ENCODE measurements at regions of chr14 and their contacts with region 1.

Region 1: GRCh38 chr14:31207755-31208545 is at the start of gene HECTD1:
- DNase-seq: peak; percentile 85
- H3K4me3 Mint-ChIP-seq: peak within 1 kb of the TSS; percentile 95
- H3K27ac Mint-ChIP-seq: peak within 1 kb of the TSS; percentile 100
- H3K4me1 Mint-ChIP-seq: peaks cover 45% of the 10 kb centered on the region
- H3K27me3 Mint-ChIP-seq: peaks cover 3% of the 10 kb centered on the region
- total RNA-seq, gene HECTD1: 118 and 127 TPM in 2 replicates

Region 2: GRCh38 chr14:30960216-30960615 is 247.7 kb before region 1 on chr14:
- intact Hi-C with region 1: loop called (anchors 5 kb)
- DNase-seq: no peak
- H3K4me3 Mint-ChIP-seq: no peak overlapping the region
- H3K27ac Mint-ChIP-seq: no peak overlapping the region
- H3K4me1 Mint-ChIP-seq: peaks cover 24% of the 10 kb centered on the region
- H3K27me3 Mint-ChIP-seq: no peaks in the 10 kb centered on the region

Region 3: GRCh38 chr14:31127690-31128089 is 80.3 kb before region 1 on chr14:
- intact Hi-C with region 1: loop called (anchors 1 kb)
- DNase-seq: peak; percentile 56
- H3K4me3 Mint-ChIP-seq: peak overlapping the region; percentile 16
- H3K27ac Mint-ChIP-seq: peak overlapping the region; percentile 64
- H3K4me1 Mint-ChIP-seq: peaks cover 31% of the 10 kb centered on the region
- H3K27me3 Mint-ChIP-seq: no peaks in the 10 kb centered on the region

Region 4: DNA sequence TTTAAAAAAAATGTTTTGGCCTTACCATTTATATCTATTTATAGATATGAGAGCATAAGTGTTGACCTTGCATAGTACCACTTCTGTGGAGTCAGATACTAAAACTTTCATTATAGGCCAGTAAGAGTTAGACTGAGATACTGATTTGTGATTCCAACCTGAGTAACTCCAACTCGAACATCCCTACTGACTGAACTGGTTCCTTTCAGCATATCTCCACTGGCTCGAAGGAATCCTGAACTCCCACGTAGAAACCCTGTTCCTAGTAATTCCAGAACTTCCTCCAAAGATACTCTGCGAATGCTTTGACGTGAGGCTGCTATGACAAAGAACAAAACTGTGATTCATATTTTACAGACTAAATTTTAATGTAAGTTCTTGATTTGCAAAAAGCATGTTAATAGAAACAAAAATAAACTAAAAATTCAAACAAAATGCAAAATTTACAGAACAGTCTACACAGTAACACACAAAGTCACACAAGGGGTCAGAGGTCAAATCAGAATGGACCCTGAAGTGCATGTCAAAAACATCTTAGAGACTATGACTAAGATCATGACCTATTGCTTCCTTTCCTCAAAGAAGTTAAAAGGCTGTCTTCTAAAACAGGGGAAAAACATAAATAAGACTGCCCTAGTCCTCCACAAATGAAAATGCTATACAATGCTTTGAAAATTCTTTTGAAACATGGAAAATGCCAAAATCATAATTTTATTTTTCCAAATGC is 180.9 kb after region 1 on chr14:
- intact Hi-C with region 1: loop called (anchors 1 kb)
- DNase-seq: no peak
- H3K4me3 Mint-ChIP-seq: peak overlapping the region; percentile 7
- H3K27ac Mint-ChIP-seq: peak overlapping the region; percentile 93
- H3K4me1 Mint-ChIP-seq: peaks cover 41% of the 10 kb centered on the region
- H3K27me3 Mint-ChIP-seq: no peaks in the 10 kb centered on the region

Region 5: GRCh38 chr14:31561155-31561846 is 353.4 kb after region 1 on chr14 and contains the start of gene NUBPL:
- intact Hi-C with region 1: loop called (anchors 2 kb)
- DNase-seq: peak; percentile 95
- H3K4me3 Mint-ChIP-seq: peak within 1 kb of the TSS; percentile 94
- H3K27ac Mint-ChIP-seq: peak within 1 kb of the TSS; percentile 98
- H3K4me1 Mint-ChIP-seq: peaks cover 23% of the 10 kb centered on the region
- H3K27me3 Mint-ChIP-seq: peaks cover 16% of the 10 kb centered on the region
- total RNA-seq, gene NUBPL: 12.0 and 13.7 TPM in 2 replicates